HCT116 (cell line): ENCODE measurements at regions of chr2 and their contacts with region 1.

Region 1: GRCh38 chr2:230798769-230799399 is 65.9 kb upstream of the ITM2C start:
- DNase-seq: no peak
- ATAC-seq: 0 out of 2 replicates have a peak, but pooled peaks have one; percentile 33
- H3K4me3 ChIP-seq: no peak overlapping the region
- H3K27ac ChIP-seq: no peak overlapping the region
- H3K4me1 ChIP-seq: peaks cover 32 to 48% of the 10 kb centered on the region in 2 experiments
- H3K27me3 ChIP-seq: no peaks in the 10 kb centered on the region
- CTCF ChIP-seq: peak; percentile 61 to 83 (median 61)
- POLR2A ChIP-seq: no peak
- RAD21 ChIP-seq: peak; percentile 92

Region 2: GRCh38 chr2:229921892-229922445 is 876.9 kb before region 1 on chr2 and contains the start of gene TRIP12:
- CTCF ChIA-PET with region 1: no interaction called
- POLR2A ChIA-PET with region 1: no interaction called
- RAD21 ChIA-PET with region 1: no interaction called
- intact Hi-C with region 1: loop called (anchors 10 kb)
- DNase-seq: peak; percentile 89
- ATAC-seq: peak; percentile 79
- H3K4me3 ChIP-seq: peak within 1 kb of the TSS; percentile 77 to 94
- H3K27ac ChIP-seq: peak within 1 kb of the TSS; percentile 77
- H3K4me1 ChIP-seq: peaks cover 14 to 17% of the 10 kb centered on the region in 2 experiments; a peak in 3 of 4 replicates
- H3K27me3 ChIP-seq: no peaks in the 10 kb centered on the region
- CTCF ChIP-seq: no peak
- POLR2A ChIP-seq: no peak
- RAD21 ChIP-seq: no peak
- total RNA-seq, gene TRIP12: 175 TPM

Region 3: GRCh38 chr2:230411570-230412370 is 387.1 kb before region 1 on chr2:
- CTCF ChIA-PET with region 1: no interaction called
- POLR2A ChIA-PET with region 1: no interaction called
- RAD21 ChIA-PET with region 1: no interaction called
- intact Hi-C with region 1: loop called (anchors 10 kb)
- DNase-seq: no peak
- ATAC-seq: peak; percentile 75
- H3K4me3 ChIP-seq: peak overlapping the region; percentile 48 to 61
- H3K27ac ChIP-seq: peak overlapping the region; percentile 16; the same call in 1 of the 2 replicates
- H3K4me1 ChIP-seq: peaks cover 4 to 33% of the 10 kb centered on the region in 2 experiments
- H3K27me3 ChIP-seq: no peaks in the 10 kb centered on the region
- CTCF ChIP-seq: no peak
- POLR2A ChIP-seq: no peak
- RAD21 ChIP-seq: no peak

Region 4: DNA sequence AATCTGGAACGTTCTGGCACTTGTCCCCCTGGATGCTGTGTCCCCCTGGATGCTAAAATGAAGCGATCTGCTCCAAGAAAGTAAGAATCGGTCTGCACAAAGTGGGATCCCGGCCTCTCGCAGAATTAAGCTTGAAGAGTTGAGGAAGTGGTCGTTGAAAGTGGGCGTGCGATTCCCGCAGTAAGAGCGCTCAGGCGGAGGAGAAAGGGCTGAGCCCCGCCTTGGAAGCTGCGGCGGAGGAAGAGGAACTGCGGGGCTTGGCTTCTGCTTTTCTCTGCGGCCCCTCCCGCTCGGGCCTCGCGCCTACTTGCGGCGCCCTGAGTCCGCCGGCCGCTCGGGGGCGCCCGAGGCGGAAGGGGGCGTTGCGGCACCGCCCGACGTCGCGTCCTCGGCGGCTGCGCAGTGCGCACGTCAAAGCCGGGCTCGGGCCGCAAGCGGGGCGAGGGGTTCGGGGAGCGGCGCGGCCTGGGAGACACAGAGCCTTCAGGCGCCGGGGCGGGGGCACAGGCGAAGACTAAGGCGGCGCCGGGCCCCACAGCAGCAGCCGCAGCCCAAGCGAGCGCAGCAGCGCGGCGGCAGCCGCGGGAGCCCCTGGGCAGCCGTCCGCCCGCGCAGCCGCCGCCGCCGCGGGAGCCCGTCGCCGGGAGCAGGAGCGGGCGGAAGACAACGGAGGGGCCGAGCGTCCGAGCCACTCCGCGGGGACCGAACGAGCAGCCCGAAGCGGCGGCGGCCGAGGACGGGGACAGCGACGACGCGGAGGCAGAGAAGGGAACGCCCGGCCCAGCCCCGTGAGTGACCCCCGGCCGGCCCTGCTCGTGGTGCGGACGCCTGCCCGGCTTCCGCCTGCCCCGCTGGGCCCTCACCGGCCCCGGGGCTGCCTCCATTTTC is 86.2 kb before region 1 on chr2 and contains the start of gene CAB39:
- CTCF ChIA-PET with region 1: interaction called, 8 read pairs
- POLR2A ChIA-PET with region 1: interaction called, 3 read pairs
- RAD21 ChIA-PET with region 1: no interaction called
- intact Hi-C with region 1: loop called (anchors 2 kb)
- DNase-seq: peak; percentile 69
- ATAC-seq: peak; percentile 92
- H3K4me3 ChIP-seq: peak within 1 kb of the TSS; percentile 68 to 85
- H3K27ac ChIP-seq: peak within 1 kb of the TSS; percentile 77
- H3K4me1 ChIP-seq: peaks cover 15 to 33% of the 10 kb centered on the region in 2 experiments; a peak in 3 of 4 replicates
- H3K27me3 ChIP-seq: no peaks in the 10 kb centered on the region
- CTCF ChIP-seq: peak; percentile 57 to 69 (median 65); a peak in 5 of 6 replicates
- POLR2A ChIP-seq: peak; percentile 50
- RAD21 ChIP-seq: peak; percentile 57
- total RNA-seq, gene CAB39: 63.6 TPM

Region 5: DNA sequence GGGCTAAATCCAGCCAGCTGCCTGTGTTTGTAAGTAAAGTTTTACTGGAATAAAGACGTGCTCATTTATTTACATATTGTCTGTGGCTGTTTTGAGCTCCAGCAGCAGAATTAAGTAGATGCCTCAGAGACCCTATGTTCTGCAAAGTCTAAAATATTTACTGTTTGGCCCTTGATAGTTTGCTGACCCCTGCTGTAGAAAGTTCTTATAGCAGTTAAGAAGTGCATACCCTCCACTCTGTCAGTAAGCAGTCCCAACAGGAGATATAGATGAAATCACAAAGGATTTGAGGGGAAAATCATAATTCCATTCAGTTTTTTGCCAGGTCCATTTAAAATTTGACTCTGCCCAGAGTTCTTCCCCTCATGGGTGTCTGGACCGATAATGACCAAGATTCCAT is 15.7 kb after region 1 on chr2:
- CTCF ChIA-PET with region 1: interaction called, 17 read pairs
- POLR2A ChIA-PET with region 1: no interaction called
- RAD21 ChIA-PET with region 1: no interaction called
- intact Hi-C with region 1: no loop called
- DNase-seq: no peak
- ATAC-seq: peak; percentile 76
- H3K4me3 ChIP-seq: no peak overlapping the region
- H3K27ac ChIP-seq: no peak overlapping the region
- H3K4me1 ChIP-seq: no peaks in the 10 kb centered on the region
- H3K27me3 ChIP-seq: no peaks in the 10 kb centered on the region
- CTCF ChIP-seq: peak; percentile 36 to 71 (median 56); a peak in 5 of 6 replicates
- POLR2A ChIP-seq: no peak
- RAD21 ChIP-seq: peak; percentile 72

Region 6: DNA sequence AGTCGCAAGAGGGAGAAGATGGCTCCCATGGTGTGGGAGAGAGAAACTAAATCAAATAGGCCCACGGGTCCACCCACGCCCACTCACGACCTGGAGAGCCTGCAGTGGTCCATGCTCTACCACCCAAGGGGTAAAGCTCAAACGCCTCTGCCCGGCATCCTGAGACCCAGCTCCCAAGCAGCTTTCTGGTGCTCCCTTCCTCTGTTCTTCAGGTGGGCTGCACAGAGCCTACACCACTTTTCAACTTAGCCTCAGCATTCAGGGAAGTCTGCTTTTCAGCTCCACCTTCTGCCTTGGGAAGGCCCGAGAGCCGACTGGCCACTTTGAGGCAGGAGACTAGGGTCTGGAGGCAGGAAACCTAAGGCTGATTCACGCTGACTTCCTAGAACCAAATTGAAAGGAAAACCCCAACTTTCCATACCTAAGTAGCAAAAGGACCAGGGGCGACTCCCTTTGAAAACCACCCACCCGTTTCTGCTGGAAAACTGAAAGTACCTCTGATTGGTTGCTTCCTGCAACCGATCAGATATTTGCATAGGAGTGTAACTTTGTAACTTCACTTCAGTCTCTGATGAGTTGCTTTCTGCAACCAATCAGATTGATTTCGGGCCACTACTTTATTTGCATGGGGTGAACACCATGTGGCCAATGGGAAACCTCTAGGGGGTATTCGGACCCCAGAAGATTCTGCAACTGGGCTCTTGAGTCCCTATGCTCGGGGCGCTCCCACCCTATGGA is 170.2 kb after region 1 on chr2:
- CTCF ChIA-PET with region 1: no interaction called
- POLR2A ChIA-PET with region 1: no interaction called
- RAD21 ChIA-PET with region 1: no interaction called
- intact Hi-C with region 1: no loop called
- DNase-seq: no peak
- ATAC-seq: no peak
- H3K4me3 ChIP-seq: no peak overlapping the region
- H3K27ac ChIP-seq: no peak overlapping the region
- H3K4me1 ChIP-seq: peaks cover 0 to 4% of the 10 kb centered on the region in 2 experiments; a peak in 1 of 4 replicates
- H3K27me3 ChIP-seq: no peaks in the 10 kb centered on the region
- CTCF ChIP-seq: no peak
- POLR2A ChIP-seq: no peak
- RAD21 ChIP-seq: no peak

Region 7: GRCh38 chr2:231015478-231015877 is 216.6 kb after region 1 on chr2:
- CTCF ChIA-PET with region 1: no interaction called
- POLR2A ChIA-PET with region 1: no interaction called
- RAD21 ChIA-PET with region 1: no interaction called
- intact Hi-C with region 1: no loop called
- DNase-seq: no peak
- ATAC-seq: no peak
- H3K4me3 ChIP-seq: no peak overlapping the region
- H3K27ac ChIP-seq: no peak overlapping the region
- H3K4me1 ChIP-seq: peaks cover 0 to 4% of the 10 kb centered on the region in 2 experiments; a peak in 1 of 4 replicates
- H3K27me3 ChIP-seq: no peaks in the 10 kb centered on the region
- CTCF ChIP-seq: no peak
- POLR2A ChIP-seq: no peak
- RAD21 ChIP-seq: no peak

Region 8: DNA sequence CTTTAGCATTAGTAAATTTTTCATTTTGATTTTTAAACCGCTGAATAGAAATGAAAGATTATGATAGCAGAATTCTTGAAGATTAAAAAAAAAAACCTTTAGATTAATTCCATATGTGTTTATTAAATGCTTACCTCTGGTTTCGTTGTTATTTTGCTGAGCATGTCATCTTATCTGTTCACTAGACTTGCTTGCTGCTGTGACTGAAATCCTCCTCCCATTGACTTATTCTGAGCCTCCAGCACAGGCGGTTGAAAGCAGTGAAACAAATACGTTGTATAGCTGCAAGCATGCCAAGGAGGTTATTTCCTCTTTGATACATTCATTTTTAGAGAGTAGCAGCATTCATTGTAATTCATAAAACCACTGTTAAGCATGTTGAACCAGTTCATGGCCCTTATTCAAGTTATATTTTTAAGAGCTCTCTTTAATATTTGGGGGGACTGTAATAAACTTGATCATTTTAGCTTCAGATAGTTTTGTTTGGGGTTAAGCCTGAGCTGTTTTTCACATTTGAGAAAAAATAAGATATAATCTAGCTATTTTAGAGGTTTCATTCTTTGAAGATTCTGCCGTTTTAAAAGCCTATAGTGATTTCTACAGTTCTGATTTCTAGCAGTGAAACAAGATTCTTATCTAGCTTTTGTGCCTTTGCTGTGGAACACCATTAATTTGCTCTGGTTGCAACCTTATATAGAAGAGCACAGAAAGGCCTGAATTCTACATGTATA is 326.1 kb after region 1 on chr2 and contains the start of gene HTR2B:
- CTCF ChIA-PET with region 1: no interaction called
- POLR2A ChIA-PET with region 1: no interaction called
- RAD21 ChIA-PET with region 1: no interaction called
- intact Hi-C with region 1: no loop called
- DNase-seq: no peak
- ATAC-seq: no peak
- H3K4me3 ChIP-seq: no peak within 1 kb of the TSS
- H3K27ac ChIP-seq: no peak within 1 kb of the TSS
- H3K4me1 ChIP-seq: no peaks in the 10 kb centered on the region
- H3K27me3 ChIP-seq: no peaks in the 10 kb centered on the region
- CTCF ChIP-seq: no peak
- POLR2A ChIP-seq: no peak
- RAD21 ChIP-seq: no peak
- total RNA-seq, gene HTR2B: not detected